Activated CD4-positive, alpha-beta T cell treated with anti-CD3 and anti-CD28 coated beads, Interleukin-2, amount 10 ng/mL, durations not matched to agents 24 days and 14 days (primary cell): ENCODE measurements at regions of chr18 and their contacts with region 1.

Region 1: DNA sequence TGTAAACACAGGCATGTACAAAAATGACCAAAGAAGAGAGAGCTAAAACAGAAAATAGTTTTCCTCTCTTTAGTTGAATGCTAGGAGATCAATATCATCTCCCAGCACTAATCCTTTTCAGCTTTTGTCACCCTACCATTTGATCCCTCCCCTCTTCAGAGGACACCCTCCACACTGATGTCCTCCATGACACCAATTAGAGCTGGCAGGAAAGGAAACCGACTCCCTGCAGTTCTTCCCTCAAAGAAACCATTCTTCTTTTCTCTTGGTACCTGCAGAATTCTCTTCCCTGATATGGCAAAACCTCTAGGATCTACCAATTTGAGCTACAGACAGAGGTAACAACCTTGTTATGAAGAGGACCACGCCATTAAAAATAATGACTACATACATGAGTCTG is 5.3 kb downstream of the EPB41L3 start:
- DNase-seq: no peak
- H3K4me3 Mint-ChIP-seq: no peak overlapping the region
- H3K27ac Mint-ChIP-seq: no peak overlapping the region
- H3K4me1 Mint-ChIP-seq: peaks cover 2% of the 10 kb centered on the region
- H3K27me3 Mint-ChIP-seq: peaks cover 22% of the 10 kb centered on the region

Region 2: DNA sequence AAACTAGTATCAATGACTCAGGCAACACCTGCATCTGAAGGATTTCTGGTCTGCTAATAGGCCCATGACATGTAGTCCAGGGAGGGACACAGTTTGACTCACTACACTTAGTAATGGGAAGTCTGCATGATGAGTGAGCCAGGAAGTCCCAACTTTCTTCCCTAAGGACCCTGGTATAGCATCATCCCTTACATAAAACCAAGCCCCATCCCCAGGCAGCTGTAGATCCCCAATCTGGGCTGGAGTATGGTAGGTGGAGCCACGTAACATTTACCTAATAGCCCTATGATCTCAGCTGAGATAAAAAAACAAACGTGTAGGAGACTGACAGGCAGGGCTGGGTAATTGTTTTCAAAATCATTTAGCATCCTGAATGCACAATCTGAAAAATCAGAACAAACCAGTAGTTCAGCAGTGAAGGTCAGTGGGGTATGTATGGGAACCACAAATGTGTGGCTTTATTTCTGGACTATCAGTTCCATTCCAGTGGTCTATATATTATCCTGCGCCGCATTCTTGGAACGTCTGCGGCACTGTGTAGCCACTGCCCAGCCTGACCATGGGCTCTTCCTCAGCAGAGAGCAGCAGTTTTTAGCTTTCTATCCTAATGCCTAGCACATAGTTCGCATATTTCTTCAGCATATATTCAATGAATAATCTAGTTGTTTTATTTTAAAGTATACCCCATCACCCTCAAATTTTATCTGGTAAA is 28.3 kb before region 1 on chr18:
- intact Hi-C with region 1: loop called (anchors 1 kb)
- DNase-seq: no peak
- H3K4me3 Mint-ChIP-seq: no peak overlapping the region
- H3K27ac Mint-ChIP-seq: no peak overlapping the region
- H3K4me1 Mint-ChIP-seq: no peaks in the 10 kb centered on the region
- H3K27me3 Mint-ChIP-seq: no peaks in the 10 kb centered on the region

Region 3: DNA sequence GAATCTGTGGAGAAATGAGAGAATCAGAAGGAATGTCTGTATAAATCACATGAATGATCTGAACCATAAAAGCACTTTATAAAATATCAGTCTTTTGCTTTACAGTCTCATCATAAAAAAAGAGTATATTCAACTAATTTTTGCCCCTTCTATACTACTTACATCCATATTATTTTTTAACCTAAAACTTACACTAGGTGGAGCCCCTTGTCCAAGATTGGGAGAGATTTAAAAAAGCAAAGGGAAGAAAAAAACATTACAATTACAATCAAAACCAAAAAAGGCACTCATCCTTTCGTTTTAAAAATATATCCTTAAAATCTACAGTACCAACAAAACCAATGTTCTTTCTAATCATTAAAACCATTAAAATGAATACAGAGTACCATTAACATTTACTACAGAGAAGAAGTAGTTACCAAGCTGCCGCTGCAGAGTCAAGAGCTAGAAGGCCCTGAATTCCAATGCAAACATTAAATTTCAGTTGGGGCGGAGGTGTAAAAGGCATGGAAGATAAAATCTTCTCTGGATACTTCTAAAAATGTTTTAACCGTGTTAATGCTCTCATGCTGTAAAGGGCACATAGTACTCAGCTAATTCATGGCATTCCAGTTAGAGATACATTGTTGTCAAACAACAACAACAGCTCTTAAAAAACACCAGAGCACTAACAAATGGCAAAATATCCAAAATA is 62.0 kb after region 1 on chr18:
- intact Hi-C with region 1: no loop called
- DNase-seq: no peak
- H3K4me3 Mint-ChIP-seq: no peak overlapping the region
- H3K27ac Mint-ChIP-seq: no peak overlapping the region
- H3K4me1 Mint-ChIP-seq: no peaks in the 10 kb centered on the region
- H3K27me3 Mint-ChIP-seq: peaks cover 2% of the 10 kb centered on the region